ENCODE measurements at regions of chr20 and their contacts with region 1.

Region 1: DNA sequence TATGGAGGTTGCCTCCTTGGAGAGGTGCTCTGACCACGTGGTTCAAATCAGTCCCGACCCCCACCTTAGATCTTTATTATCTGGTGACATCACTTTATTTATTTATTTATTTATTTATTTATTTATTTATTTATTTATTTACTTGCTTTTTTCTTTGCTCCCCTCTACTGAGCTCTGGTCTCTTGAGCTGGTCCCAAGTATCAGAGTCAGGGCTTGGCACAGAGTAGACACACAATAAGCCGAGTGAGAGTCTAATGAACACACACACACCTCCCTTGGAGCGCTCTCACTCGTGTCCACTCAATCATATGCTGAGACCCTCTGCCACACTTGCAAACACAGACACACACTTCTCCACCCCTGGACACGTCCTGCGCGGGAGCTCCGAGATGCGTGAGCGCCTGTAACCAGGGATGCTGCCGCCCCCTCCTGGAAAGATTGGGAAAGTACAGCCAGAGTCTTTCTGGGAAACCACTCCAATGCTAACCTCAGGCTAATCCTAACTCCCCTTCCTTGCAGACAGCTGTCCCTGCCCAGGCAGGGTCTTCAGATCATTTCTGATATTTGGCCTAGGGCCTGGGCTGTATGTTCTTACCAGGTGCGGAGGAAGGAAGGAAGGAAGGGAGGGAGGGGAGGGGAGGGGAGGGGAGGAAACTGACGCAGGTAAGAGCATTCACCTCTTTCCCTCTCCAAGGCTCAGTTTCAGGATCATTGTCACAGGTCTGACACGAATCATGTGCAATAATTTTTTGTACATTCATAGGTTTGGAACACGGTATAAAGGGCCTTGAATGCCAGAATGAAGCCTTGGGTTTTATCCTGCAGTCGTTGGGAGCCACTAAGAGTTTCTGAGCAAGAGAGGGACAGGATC is 70.9 kb downstream of the STK35 start:
- DNase-seq: peak; percentile 10 to 74
- H3K4me3 ChIP-seq: no peak overlapping the region
- H3K4me1 ChIP-seq: no peaks in the 10 kb centered on the region
- H3K27me3 ChIP-seq: 0 out of 2 replicates have a peak, but pooled peaks cover 2% of the 10 kb centered on the region

Region 2: DNA sequence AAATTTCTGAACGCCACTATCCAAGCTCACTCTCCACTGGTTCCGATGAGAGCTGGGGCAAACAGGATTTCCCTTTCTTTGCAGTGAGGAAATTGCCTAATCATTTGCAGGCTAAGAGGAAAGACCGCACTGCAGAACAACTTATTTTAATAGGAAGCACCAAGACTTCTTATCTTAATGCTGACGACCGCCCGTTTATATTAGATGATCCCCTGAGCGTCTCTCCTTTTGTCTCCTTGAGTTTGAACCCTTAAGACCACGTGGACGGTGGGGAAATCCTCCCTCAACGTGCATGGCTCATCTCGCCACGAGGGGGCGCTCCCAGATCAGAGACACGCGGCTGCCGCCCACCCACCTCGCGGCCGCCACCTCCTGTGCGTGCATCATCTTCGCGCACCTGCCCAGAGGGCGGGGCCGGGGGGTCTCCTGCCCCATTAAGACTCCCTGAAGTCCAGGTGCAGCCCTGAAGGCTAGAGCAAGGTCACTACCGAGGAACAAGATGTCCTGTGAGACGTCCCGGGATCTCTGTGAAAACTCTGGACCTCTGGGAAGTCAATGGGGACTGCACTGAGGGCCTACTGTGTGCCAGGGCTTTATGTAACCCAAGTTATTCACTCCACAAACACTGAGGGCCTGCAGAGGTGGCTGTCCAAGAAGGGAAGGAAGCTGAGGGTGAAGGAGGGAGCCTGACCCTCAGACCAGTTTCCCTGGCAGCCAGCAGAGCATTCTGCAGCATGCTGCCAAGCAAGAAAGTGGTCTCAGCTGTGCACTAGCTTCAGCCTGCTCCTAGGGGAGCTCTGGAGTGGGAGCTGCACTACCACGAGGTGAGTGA is 206.8 kb before region 1 on chr20:
- in situ Hi-C with region 1: loop called (anchors 10 kb)
- DNase-seq: peak; percentile 58 to 87
- H3K4me3 ChIP-seq: no peak overlapping the region
- H3K4me1 ChIP-seq: 0 out of 2 replicates have a peak, but pooled peaks cover 2% of the 10 kb centered on the region
- H3K27me3 ChIP-seq: peaks cover 48% of the 10 kb centered on the region